ENCODE measurements at regions of chr1 and their contacts with region 1.

Region 1: GRCh38 chr1:212477014-212477679 is 44.4 kb downstream of the NENF start:
- DNase-seq: peak; percentile 80
- ATAC-seq: peak; percentile 95

Region 2: GRCh38 chr1:212630158-212630900 is 153.2 kb after region 1 on chr1:
- intact Hi-C with region 1: loop called (anchors 1 kb)
- DNase-seq: peak; percentile 84
- ATAC-seq: peak; percentile 85

Region 3: GRCh38 chr1:212782422-212783154 is 305.4 kb after region 1 on chr1:
- intact Hi-C with region 1: loop called (anchors 1 kb)
- DNase-seq: no peak
- ATAC-seq: peak; percentile 52